ENCODE measurements at regions of chr2 and their contacts with region 1.

Region 1: DNA sequence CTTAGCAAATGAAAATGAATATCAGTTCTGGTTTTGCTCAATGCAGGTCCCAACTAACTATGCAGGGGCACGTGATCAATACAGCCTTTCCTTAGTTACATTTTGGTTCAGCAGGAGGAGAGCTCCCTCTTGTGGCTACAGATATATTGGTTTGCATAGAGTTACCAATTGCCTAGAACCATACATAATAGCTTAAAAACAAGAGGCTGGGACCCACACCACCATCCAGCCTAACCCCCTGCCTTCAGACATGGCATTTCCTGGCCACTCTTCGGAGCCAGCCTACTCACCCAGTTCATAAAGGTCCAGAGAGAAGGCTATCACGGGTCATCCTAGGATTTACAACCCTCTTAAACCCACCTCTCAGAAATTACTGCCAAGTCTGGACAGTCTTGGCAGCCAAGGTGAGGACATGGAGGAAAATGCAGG is 10.5 kb downstream of the CCDC93 start:
- DNase-seq: peak; percentile 69
- H3K4me3 ChIP-seq: no peak overlapping the region
- H3K27ac ChIP-seq: no peak overlapping the region
- H3K27me3 ChIP-seq: no peaks in the 10 kb centered on the region
- CTCF ChIP-seq: peak; percentile 89

Region 2: DNA sequence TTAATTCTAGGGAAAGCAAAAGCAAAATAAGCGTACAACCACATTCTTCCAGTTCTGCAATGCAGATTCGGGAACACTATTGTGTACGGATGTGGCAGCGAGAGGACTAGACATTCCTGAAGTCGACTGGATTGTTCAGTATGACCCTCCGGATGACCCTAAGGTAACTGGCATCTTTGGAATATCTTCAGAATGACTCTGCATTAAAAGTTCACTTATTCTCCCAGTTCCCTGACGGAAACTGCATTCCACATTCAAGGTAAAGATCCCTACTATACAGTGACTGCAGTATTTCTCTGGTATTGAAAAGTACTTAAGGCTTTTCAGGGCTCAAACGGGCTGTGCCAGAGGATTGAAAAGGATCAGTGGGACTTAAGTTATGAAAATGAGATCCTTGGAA is 178.0 kb before region 1 on chr2:
- CTCF ChIA-PET with region 1: interaction called, 16 read pairs
- POLR2A ChIA-PET with region 1: no interaction called
- DNase-seq: no peak
- H3K4me3 ChIP-seq: no peak overlapping the region
- H3K27ac ChIP-seq: no peak overlapping the region
- H3K27me3 ChIP-seq: no peaks in the 10 kb centered on the region
- CTCF ChIP-seq: no peak

Region 3: GRCh38 chr2:117936871-117937428 is 66.5 kb before region 1 on chr2:
- CTCF ChIA-PET with region 1: interaction called, 40 read pairs
- POLR2A ChIA-PET with region 1: no interaction called
- DNase-seq: no peak
- H3K4me3 ChIP-seq: no peak overlapping the region
- H3K27ac ChIP-seq: no peak overlapping the region
- H3K27me3 ChIP-seq: no peaks in the 10 kb centered on the region
- CTCF ChIP-seq: no peak

Region 4: DNA sequence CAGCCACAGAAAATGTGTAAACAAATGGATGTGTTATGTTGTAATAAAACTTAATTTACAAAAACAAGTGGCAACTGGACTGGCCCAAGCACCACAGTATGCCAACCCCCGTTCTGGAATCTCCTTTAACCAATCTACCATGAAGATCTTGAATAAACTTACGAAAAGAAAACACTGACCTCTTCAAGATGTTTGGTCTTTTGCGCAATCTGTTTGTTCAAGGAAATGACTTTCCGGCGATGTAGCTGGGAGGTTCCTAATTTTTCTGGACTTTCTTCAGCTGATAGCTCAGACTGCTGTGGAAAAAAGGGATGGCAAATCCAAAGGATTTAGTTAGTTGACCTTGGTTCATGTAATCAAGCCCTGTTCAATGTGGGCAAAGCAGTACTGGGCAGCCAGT is 45.2 kb before region 1 on chr2:
- CTCF ChIA-PET with region 1: interaction called, 100 read pairs
- POLR2A ChIA-PET with region 1: no interaction called
- DNase-seq: no peak
- H3K4me3 ChIP-seq: no peak overlapping the region
- H3K27ac ChIP-seq: no peak overlapping the region
- H3K27me3 ChIP-seq: no peaks in the 10 kb centered on the region
- CTCF ChIP-seq: no peak

Region 5: GRCh38 chr2:118013724-118014491 is 10.5 kb after region 1 on chr2 and contains the start of gene CCDC93:
- CTCF ChIA-PET with region 1: interaction called, 55 read pairs
- POLR2A ChIA-PET with region 1: no interaction called
- DNase-seq: peak; percentile 44
- H3K4me3 ChIP-seq: peak within 1 kb of the TSS; percentile 91
- H3K27ac ChIP-seq: peak within 1 kb of the TSS; percentile 39
- H3K27me3 ChIP-seq: no peaks in the 10 kb centered on the region
- CTCF ChIP-seq: no peak
- polyA plus RNA-seq, gene CCDC93: 17.7 and 19.9 TPM in 2 replicates

Region 6: GRCh38 chr2:118061135-118061955 is 57.9 kb after region 1 on chr2:
- CTCF ChIA-PET with region 1: interaction called, 11 read pairs
- POLR2A ChIA-PET with region 1: no interaction called
- DNase-seq: no peak
- H3K4me3 ChIP-seq: no peak overlapping the region
- H3K27ac ChIP-seq: no peak overlapping the region
- H3K27me3 ChIP-seq: no peaks in the 10 kb centered on the region
- CTCF ChIP-seq: 0 out of 2 replicates have a peak, but pooled peaks have one; percentile 17